AG04449 (cell line): ENCODE measurements at regions of chr19 and their contacts with region 1.

Region 1: DNA sequence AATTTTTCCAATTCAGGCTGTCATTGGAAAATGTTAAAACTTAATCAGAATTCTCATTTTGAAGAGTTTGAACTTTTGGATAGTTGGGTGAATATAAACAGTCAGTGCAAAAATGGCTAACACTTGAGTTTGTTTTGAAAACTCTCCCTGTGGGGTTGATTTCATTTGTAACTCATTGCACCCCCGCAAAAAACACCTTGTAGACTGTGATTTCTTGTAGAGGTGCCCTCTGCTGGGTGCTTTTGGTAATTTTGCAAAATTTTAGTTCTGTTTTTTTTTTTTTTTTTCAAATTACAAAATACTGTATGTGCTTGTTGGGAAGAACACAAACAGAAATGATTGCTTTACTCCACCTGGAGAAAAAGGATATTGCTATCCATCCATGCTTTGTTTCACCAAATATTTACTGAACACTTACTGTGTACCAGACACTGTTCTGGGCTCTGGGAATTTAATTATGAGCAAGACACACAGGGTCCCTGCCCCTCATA is 28.2 kb upstream of the GPI start:
- DNase-seq: no peak
- H3K4me3 ChIP-seq: no peak overlapping the region
- CTCF ChIP-seq: peak; percentile 36

Region 2: DNA sequence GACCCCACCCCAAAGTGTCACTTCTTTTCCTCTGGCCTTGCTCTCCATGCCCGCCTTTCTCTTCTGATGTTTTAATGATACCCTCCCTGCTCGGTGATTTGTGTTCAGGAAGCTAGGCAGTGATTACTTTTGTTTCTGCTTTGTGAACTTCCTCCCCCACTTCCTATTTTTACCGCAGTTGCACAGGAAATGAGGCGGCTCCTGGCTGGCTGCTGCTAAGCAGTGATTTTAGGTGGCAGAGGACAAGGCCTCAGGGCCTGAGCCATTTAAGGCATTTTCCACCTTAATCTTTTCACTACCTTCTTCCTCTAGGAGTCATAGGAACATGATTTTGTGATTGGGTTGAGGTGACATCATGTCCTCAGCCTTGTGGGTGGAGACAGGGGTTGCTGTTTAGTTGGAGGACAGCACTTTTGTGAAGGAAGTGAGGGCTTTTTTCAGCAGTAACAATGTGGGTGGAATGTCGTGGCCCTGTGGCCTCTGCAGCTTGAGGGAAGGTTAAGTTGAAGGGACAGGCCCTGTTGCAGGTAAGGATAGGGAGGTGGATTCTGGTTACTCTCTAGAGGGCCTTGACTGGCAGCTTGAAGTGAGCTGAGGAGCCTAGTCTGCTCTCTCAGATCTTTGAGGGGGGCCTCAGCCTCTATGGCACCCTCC is 66.7 kb before region 1 on chr19:
- CTCF ChIA-PET with region 1: interaction called, 10 read pairs
- POLR2A ChIA-PET with region 1: no interaction called
- DNase-seq: no peak
- H3K4me3 ChIP-seq: no peak overlapping the region
- CTCF ChIP-seq: no peak